ENCODE measurements at regions of chr19 and their contacts with region 1.

Region 1: GRCh38 chr19:46766569-46767317 is 20.5 kb upstream of the STRN4 start:
- DNase-seq: no peak

Region 2: GRCh38 chr19:46828484-46828883 is 61.7 kb after region 1 on chr19:
- intact Hi-C with region 1: loop called in 1 of 2 experiments (anchors 2 kb)
- DNase-seq: no peak